Transverse colon (tissue), 4 donors: ENCODE measurements at regions of chr11 and their contacts with region 1.

Region 1: GRCh38 chr11:17786824-17787525 is 52.4 kb downstream of the KCNC1 start:
- DNase-seq: no peak
- H3K4me3 ChIP-seq: no peak overlapping the region
- H3K27ac ChIP-seq: no peak overlapping the region
- H3K4me1 ChIP-seq: no peaks in the 10 kb centered on the region
- H3K27me3 ChIP-seq: no peaks in the 10 kb centered on the region
- CTCF ChIP-seq: no peak
- EP300 ChIP-seq: no peak
- POLR2A ChIP-seq: no peak

Region 2: GRCh38 chr11:17598700-17599459 is 188.1 kb before region 1 on chr11:
- in situ Hi-C with region 1: no loop called
- intact Hi-C with region 1: loop called (anchors 5 kb)
- DNase-seq: peak; percentile 67
- H3K4me3 ChIP-seq: no peak overlapping the region
- H3K27ac ChIP-seq: no peak overlapping the region
- H3K4me1 ChIP-seq: no peaks in the 10 kb centered on the region
- H3K27me3 ChIP-seq: peaks cover 4% of the 10 kb centered on the region
- CTCF ChIP-seq: peak; percentile 76 to 91 (median 86)
- EP300 ChIP-seq: no peak
- POLR2A ChIP-seq: no peak